AG04450 (cell line): ENCODE measurements at regions of chrX and their contacts with region 1.

Region 1: GRCh38 chrX:109911046-109911445 is 91.9 kb upstream of the TMEM164 start:
- DNase-seq: no peak
- H3K4me3 ChIP-seq: no peak overlapping the region
- H3K27ac ChIP-seq: no peak overlapping the region
- H3K27me3 ChIP-seq: peaks cover 1% of the 10 kb centered on the region
- CTCF ChIP-seq: peak; percentile 58

Region 2: DNA sequence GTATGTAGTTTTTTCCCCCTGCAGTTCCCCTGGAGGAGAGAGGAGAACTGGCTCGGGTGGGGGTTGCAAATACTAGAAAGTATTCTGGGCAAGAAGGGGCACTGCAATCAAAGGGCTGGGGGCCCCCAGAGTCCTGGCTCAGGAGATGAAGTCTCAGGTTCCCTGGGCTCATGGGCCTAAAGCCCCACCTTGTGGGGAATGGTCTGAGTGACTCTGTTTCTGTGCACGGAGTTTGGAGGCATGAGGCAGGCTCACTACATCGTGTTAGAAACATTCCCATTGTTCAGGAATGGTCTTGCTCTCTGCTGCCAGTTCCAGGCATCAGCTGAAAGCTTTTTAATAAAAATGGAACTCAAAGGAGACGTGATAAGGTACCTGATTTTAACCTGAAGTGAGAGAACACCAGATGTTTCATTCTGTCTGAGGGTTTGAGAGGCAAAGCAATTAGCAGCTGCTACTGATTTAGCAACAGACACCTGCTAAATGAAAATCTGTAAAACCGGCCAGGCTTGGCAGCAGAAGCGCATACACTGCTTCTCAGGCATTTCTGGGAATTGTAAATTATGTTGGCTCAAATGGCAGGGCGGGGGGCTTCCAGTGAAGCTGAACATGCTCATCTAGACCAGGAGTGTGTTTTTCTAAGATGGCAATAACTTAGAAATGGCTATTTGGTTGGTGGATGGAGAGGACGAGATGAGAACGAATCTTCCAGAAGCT is 214.6 kb after region 1 on chrX:
- CTCF ChIA-PET with region 1: interaction called, 13 read pairs
- POLR2A ChIA-PET with region 1: no interaction called
- DNase-seq: no peak
- H3K4me3 ChIP-seq: no peak overlapping the region
- H3K27ac ChIP-seq: no peak overlapping the region
- H3K27me3 ChIP-seq: no peaks in the 10 kb centered on the region
- CTCF ChIP-seq: peak; percentile 44